ENCODE measurements at regions of chrX and their contacts with region 1.

Region 1: GRCh38 chrX:50691820-50692219 is 122.2 kb downstream of the SHROOM4 start:
- DNase-seq: no peak
- H3K4me3 Mint-ChIP-seq: no peak overlapping the region
- H3K27ac Mint-ChIP-seq: no peak overlapping the region
- H3K4me1 Mint-ChIP-seq: no peaks in the 10 kb centered on the region
- H3K27me3 Mint-ChIP-seq: no peaks in the 10 kb centered on the region

Region 2: DNA sequence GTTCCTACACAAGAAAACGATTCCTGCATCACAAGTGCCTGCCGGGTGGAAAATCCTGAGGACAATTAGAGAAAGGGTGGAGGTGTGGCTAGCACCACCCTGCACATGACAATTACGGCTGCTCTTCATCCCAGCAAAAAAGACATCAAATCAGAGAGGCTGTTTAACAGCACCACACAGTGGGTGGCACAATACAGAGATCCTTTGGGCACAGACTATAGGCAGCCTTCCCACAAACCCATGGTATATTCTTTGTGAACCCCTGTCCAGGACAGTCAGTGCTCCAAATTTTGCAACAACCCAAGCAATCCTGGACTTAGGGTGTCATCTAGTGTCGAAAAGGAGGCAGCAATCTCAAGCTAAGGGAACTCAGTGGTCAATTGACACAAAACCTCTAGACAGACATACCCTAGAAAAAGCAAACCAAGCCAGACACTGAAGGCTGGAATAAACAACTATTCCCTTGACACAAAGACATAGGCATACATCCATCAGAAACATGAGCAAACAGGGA is 356.1 kb after region 1 on chrX:
- intact Hi-C with region 1: no loop called
- DNase-seq: no peak
- H3K4me3 Mint-ChIP-seq: no peak overlapping the region
- H3K27ac Mint-ChIP-seq: no peak overlapping the region
- H3K4me1 Mint-ChIP-seq: no peaks in the 10 kb centered on the region
- H3K27me3 Mint-ChIP-seq: peaks cover 6% of the 10 kb centered on the region

Region 3: GRCh38 chrX:51461053-51462044 is 769.5 kb after region 1 on chrX:
- intact Hi-C with region 1: loop called (anchors 2 kb)
- DNase-seq: no peak
- H3K4me3 Mint-ChIP-seq: no peak overlapping the region
- H3K27ac Mint-ChIP-seq: no peak overlapping the region
- H3K4me1 Mint-ChIP-seq: no peaks in the 10 kb centered on the region
- H3K27me3 Mint-ChIP-seq: no peaks in the 10 kb centered on the region

Measured in activated T-helper 1 cell treated with anti-CD3 and anti-CD28 coated beads, Interleukin-12 subunit alpha, Interleukin-12 subunit beta, Interleukin-2, Interleukin-4 antibody, amounts not matched to agents 30 ng/mL and 10 ng/mL and 1 ng/mL, durations not matched to agents 14 hours and 24 hours and 36 hours (primary cell).